ENCODE measurements at regions of chr2 and their contacts with region 1.

Region 1: DNA sequence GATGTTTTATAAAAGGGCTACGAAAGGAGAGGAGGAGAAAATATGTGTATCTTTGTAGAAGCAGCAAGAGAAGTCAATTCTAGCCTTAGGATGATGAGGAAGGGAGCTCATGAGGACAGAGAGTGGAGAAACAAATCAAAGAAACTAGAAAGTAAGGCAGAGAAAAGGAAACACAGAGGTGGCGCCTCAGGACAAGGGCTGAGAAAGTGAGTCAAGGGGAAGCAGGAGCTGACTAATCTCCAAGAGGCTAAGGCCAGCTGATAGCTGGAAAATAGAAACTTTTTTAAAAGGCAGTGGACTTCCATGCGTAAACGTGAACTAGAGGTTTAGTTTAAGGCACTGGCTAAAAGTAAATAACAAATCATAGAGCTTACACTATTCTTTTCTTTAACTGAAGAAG is 173.3 kb downstream of the ANKRD44 start:
- DNase-seq: no peak
- ATAC-seq: no peak
- H3K4me3 ChIP-seq: no peak overlapping the region
- H3K27ac ChIP-seq: no peak overlapping the region
- H3K4me1 ChIP-seq: peaks cover 32% of the 10 kb centered on the region
- H3K27me3 ChIP-seq: no peaks in the 10 kb centered on the region
- CTCF ChIP-seq: no peak
- EP300 ChIP-seq: no peak
- POLR2A ChIP-seq: no peak
- RAD21 ChIP-seq: no peak

Region 2: GRCh38 chr2:195838002-195838401 is 1299.2 kb before region 1 on chr2:
- CTCF ChIA-PET with region 1: no interaction called
- POLR2A ChIA-PET with region 1: no interaction called
- RAD21 ChIA-PET with region 1: no interaction called
- SMC1A ChIA-PET with region 1: no interaction called
- in situ Hi-C with region 1: no loop called
- intact Hi-C with region 1: no loop called
- DNase-seq: no peak
- ATAC-seq: no peak
- H3K4me3 ChIP-seq: no peak overlapping the region
- H3K27ac ChIP-seq: no peak overlapping the region
- H3K4me1 ChIP-seq: no peaks in the 10 kb centered on the region
- H3K27me3 ChIP-seq: no peaks in the 10 kb centered on the region
- CTCF ChIP-seq: no peak
- EP300 ChIP-seq: no peak
- POLR2A ChIP-seq: no peak
- RAD21 ChIP-seq: no peak

Region 3: GRCh38 chr2:197152451-197153228 is 15.4 kb after region 1 on chr2:
- CTCF ChIA-PET with region 1: interaction called, 12 read pairs
- POLR2A ChIA-PET with region 1: interaction called, 7 read pairs
- RAD21 ChIA-PET with region 1: interaction called, 18 read pairs
- SMC1A ChIA-PET with region 1: interaction called, 24 read pairs
- in situ Hi-C with region 1: no loop called
- intact Hi-C with region 1: no loop called
- DNase-seq: peak; percentile 67
- ATAC-seq: peak; percentile 93
- H3K4me3 ChIP-seq: peak overlapping the region; percentile 25; the same call in 1 of the 2 replicates
- H3K27ac ChIP-seq: peak overlapping the region; percentile 48
- H3K4me1 ChIP-seq: peaks cover 34% of the 10 kb centered on the region
- H3K27me3 ChIP-seq: no peaks in the 10 kb centered on the region
- CTCF ChIP-seq: peak in 2 of 3 experiments; percentile 31 to 39; a peak in 2 of 6 replicates
- EP300 ChIP-seq: peak in 1 of 2 experiments; percentile 44; a peak in 1 of 4 replicates
- POLR2A ChIP-seq: no peak
- RAD21 ChIP-seq: no peak; the same call in 1 of the 2 replicates

Region 4: DNA sequence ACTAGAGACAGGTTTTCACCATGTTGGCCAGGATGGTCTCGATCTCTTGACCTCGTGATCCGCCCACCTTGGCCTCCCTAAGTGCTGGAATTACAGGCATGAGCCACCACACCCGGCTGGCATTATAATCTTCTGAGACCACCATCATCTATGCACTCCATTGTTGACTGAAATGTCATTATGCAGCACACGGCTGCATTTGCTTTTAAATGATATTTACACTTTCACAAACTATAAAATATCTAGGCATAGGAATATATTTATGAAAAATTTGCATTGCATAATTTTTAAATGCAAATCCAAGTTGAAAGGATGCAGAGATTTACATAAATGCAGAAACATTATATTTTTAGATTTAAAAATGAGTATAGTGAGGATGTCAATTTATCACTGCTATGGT is 203.4 kb after region 1 on chr2:
- CTCF ChIA-PET with region 1: no interaction called
- POLR2A ChIA-PET with region 1: no interaction called
- RAD21 ChIA-PET with region 1: no interaction called
- SMC1A ChIA-PET with region 1: no interaction called
- in situ Hi-C with region 1: no loop called
- intact Hi-C with region 1: no loop called
- DNase-seq: no peak
- ATAC-seq: no peak
- H3K4me3 ChIP-seq: no peak overlapping the region
- H3K27ac ChIP-seq: no peak overlapping the region
- H3K4me1 ChIP-seq: no peaks in the 10 kb centered on the region
- H3K27me3 ChIP-seq: no peaks in the 10 kb centered on the region
- CTCF ChIP-seq: no peak
- EP300 ChIP-seq: no peak
- POLR2A ChIP-seq: no peak
- RAD21 ChIP-seq: no peak

Measured in GM12878 (cell line).